ENCODE measurements at regions of chr9 and their contacts with region 1.

Region 1: DNA sequence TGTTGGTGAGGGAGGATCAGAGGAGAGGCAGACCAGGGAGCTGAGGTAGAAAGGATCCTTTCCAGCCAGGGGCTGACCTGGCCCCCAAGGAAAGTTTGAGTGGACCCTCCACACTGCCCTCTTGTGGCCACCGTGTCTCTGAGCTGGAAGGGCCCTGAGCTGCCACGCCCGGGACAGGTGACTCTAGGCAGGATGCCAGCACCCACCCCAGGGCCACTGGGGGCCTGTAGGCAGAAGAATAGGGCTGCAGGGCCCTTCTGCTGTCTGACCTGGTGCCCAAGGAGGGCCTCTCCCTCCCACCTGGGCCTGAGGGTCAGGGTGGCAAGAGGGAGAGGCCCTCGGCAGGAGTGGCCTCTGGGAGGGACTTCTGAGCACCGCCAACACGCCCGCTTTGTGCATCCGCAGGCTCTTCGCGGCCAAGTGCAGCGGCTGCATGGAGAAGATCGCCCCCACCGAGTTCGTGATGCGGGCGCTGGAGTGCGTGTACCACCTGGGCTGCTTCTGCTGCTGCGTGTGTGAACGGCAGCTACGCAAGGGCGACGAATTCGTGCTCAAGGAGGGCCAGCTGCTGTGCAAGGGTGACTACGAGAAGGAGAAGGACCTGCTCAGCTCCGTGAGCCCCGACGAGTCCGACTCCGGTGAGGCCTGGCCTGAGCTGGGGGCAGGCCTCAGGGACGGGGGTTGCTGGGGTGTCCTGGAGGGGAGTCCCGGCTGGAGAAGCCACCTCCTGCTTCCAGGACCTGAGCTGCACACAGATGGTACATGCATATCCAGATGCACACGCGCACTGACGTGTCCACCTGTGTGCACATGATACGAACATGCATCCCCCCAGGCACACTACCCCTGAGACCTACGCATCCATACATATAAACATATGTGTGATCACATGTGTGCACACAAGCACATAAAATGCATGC is 77.0 kb downstream of the LMX1B start:
- DNase-seq: no peak
- ATAC-seq: peak; percentile 92
- H3K4me3 ChIP-seq: no peak overlapping the region
- H3K27ac ChIP-seq: no peak overlapping the region
- H3K4me1 ChIP-seq: no peaks in the 10 kb centered on the region
- H3K27me3 ChIP-seq: peaks cover 0 to 2% of the 10 kb centered on the region in 2 experiments; a peak in 2 of 4 replicates
- CTCF ChIP-seq: peak; percentile 55 to 78 (median 58)
- EP300 ChIP-seq: no peak
- POLR2A ChIP-seq: no peak
- RAD21 ChIP-seq: peak; percentile 27; the same call in 1 of the 2 replicates

Region 2: DNA sequence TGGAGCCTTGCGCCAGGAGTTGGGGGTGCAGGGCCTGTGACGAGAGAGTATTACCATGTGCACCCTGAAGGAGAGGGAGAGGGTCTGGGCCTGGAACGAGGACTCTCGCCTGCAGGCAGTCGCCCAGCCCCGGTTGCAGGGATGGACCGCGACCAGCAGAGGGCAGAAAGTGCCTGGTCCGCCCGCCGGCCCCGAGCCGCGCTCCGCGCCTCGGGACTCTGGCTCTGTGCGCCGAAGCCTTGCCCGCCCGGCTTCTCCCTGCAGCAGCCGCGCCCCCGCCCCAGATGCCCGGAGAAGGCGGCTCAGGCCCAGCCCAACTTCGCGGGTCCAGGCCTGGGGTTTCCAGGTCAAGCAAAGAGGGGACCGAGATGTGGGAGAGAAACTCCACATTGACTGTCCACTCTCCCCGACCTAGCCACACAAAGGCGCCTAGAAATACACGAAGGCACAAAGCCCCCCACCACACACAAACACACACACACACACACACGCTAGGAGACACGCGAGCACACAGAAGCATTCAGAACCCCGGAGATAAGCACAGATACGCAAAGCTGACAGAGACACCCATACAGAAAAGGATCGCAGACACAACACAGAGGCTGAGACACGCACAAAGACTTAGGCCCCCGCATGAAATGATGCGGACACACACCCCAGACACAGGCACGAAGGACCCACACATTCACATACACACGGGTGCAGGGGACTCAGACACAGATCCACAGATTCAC is 78.9 kb before region 1 on chr9:
- CTCF ChIA-PET with region 1: no interaction called
- POLR2A ChIA-PET with region 1: no interaction called
- RAD21 ChIA-PET with region 1: no interaction called
- SMC1A ChIA-PET with region 1: no interaction called
- in situ Hi-C with region 1: no loop called
- intact Hi-C with region 1: loop called (anchors 2 kb)
- DNase-seq: no peak
- ATAC-seq: peak; percentile 96
- H3K4me3 ChIP-seq: no peak overlapping the region
- H3K27ac ChIP-seq: no peak overlapping the region
- H3K4me1 ChIP-seq: no peaks in the 10 kb centered on the region
- H3K27me3 ChIP-seq: peaks cover 16 to 24% of the 10 kb centered on the region in 2 experiments
- CTCF ChIP-seq: peak; percentile 70 to 78 (median 70)
- EP300 ChIP-seq: no peak
- POLR2A ChIP-seq: no peak
- RAD21 ChIP-seq: peak; percentile 46

Region 3: DNA sequence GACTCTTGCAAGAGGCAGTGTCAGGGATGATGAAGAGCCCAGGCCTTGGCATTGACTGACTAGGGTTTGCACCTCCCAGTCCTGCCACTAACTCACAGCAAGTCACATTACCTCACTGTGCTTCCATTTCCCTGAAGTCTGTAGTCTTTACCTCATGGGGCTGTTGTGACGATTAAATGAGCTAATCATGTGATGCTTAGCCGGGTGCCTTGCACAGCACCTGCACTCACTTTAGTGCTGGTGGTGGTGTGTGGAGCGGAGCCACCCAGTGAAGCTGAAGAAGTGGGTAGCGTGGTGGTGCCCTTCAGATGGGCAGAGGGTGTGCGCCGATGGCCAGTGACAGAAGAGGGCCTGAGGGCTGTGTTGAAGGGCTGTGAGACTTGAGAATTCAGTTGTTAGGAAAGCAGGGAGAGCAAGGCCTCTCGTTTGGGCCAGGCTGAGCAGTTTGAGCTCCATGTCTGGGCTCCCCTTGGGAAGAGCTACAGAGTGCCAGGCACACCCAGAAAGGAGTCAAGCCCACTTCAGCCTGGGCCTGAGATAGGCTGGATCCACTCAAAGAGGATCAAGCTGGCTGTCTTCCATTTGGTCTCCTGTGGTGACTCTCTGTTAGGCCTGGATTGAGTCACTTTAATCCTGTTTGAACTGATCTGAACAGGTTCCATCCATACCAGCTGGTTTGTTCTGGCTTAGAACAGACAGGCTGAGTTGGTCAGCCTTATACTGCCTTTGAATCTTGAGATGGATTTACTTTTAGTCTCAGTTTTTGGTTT is 266.4 kb after region 1 on chr9:
- CTCF ChIA-PET with region 1: no interaction called
- POLR2A ChIA-PET with region 1: no interaction called
- RAD21 ChIA-PET with region 1: no interaction called
- SMC1A ChIA-PET with region 1: no interaction called
- in situ Hi-C with region 1: no loop called
- intact Hi-C with region 1: no loop called
- DNase-seq: no peak
- ATAC-seq: no peak
- H3K4me3 ChIP-seq: no peak overlapping the region
- H3K27ac ChIP-seq: no peak overlapping the region
- H3K4me1 ChIP-seq: no peaks in the 10 kb centered on the region
- H3K27me3 ChIP-seq: no peaks in the 10 kb centered on the region
- CTCF ChIP-seq: no peak
- EP300 ChIP-seq: no peak
- POLR2A ChIP-seq: no peak
- RAD21 ChIP-seq: no peak